Breast epithelium (tissue), 4 donors: ENCODE measurements at regions of chr13 and their contacts with region 1.

Region 1: GRCh38 chr13:71587817-71588216 is 279.2 kb downstream of the DACH1 start:
- DNase-seq: no peak
- H3K4me3 ChIP-seq: no peak overlapping the region
- H3K27ac ChIP-seq: no peak overlapping the region
- H3K4me1 ChIP-seq: no peaks in the 10 kb centered on the region
- H3K27me3 ChIP-seq: no peaks in the 10 kb centered on the region
- CTCF ChIP-seq: no peak
- POLR2A ChIP-seq: no peak

Region 2: GRCh38 chr13:72255908-72256307 is 668.1 kb after region 1 on chr13:
- intact Hi-C with region 1: loop called (anchors 10 kb)
- DNase-seq: no peak
- H3K4me3 ChIP-seq: no peak overlapping the region
- H3K27ac ChIP-seq: no peak overlapping the region
- H3K4me1 ChIP-seq: no peaks in the 10 kb centered on the region
- H3K27me3 ChIP-seq: no peaks in the 10 kb centered on the region
- CTCF ChIP-seq: peak in 2 of 3 donors; percentile 30 to 52
- POLR2A ChIP-seq: no peak